ENCODE measurements at regions of chr9 and their contacts with region 1.

Region 1: GRCh38 chr9:116860509-116861120 is 173.5 kb downstream of the TRIM32 start:
- DNase-seq: peak; percentile 55 to 77
- ATAC-seq: peak; percentile 72
- H3K4me3 ChIP-seq: no peak overlapping the region
- H3K27ac ChIP-seq: no peak overlapping the region
- H3K4me1 ChIP-seq: no peaks in the 10 kb centered on the region
- H3K27me3 ChIP-seq: no peaks in the 10 kb centered on the region

Region 2: DNA sequence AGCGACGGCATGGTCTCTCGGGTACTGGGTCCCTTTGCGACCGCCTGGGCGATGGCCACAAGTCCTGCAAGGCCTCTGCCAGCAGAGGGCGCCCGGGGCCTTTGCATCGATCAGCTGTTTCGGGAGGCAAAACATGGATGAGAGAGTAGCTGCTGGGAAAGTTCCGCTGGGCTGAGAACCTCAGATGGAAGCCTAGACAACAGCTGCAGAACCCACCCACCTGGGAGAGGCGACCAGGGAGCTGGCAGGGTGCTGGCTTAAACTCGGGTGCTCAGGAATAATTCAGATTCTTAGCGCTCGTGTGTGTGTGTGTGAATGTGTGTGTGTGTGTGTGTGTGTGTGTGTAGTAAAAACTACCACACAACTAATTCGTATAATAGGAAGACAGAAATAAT is 123.5 kb before region 1 on chr9:
- intact Hi-C with region 1: loop called in 1 of 2 experiments (anchors 10 kb)
- DNase-seq: peak; percentile 82 to 91
- ATAC-seq: peak; percentile 30
- H3K4me3 ChIP-seq: no peak overlapping the region
- H3K27ac ChIP-seq: no peak overlapping the region
- H3K4me1 ChIP-seq: no peaks in the 10 kb centered on the region
- H3K27me3 ChIP-seq: no peaks in the 10 kb centered on the region

Region 3: DNA sequence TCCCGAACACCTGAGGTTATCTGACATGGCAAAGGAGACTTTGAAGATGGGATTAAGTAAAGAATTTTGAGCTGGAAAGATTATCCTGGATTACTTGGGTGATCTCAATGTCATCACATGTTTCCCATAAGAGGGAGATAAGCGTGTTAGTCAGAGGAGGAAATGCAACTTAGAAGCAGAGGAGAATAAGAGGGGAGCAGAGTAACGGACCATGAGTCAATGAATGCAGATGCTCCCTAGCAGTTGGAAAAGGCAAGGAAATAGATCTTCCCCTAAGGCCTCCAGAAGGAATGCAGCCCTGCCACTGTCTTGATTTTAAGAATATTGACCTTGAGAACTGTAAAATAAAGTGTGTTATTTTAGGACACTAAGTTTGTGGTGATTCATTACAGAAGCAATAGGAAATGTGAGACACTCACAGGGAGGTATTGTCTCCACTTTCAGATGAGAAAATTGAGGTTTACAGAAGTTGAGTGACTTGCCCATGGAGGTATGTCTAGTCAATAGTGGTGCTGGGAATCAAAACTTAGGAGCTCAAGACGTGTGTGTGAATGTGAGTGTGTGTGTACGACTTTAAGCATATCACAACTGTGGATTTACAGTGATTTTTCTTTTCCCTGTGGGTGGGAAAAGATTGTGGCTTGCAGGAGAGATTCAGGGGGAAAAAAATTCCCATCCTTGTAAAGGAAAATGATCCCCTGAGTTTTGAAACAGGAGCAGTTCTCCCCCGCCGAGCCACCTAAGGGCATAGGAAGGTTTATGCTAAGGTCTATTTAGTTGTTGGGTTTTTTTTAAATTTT is 48.2 kb before region 1 on chr9:
- intact Hi-C with region 1: no loop called
- DNase-seq: no peak
- ATAC-seq: no peak
- H3K4me3 ChIP-seq: no peak overlapping the region
- H3K27ac ChIP-seq: no peak overlapping the region
- H3K4me1 ChIP-seq: no peaks in the 10 kb centered on the region
- H3K27me3 ChIP-seq: no peaks in the 10 kb centered on the region

Measured in aorta (tissue), 5 donors.